Pancreas (tissue), 10 donors: ENCODE measurements at regions of chr3 and their contacts with region 1.

Region 1: DNA sequence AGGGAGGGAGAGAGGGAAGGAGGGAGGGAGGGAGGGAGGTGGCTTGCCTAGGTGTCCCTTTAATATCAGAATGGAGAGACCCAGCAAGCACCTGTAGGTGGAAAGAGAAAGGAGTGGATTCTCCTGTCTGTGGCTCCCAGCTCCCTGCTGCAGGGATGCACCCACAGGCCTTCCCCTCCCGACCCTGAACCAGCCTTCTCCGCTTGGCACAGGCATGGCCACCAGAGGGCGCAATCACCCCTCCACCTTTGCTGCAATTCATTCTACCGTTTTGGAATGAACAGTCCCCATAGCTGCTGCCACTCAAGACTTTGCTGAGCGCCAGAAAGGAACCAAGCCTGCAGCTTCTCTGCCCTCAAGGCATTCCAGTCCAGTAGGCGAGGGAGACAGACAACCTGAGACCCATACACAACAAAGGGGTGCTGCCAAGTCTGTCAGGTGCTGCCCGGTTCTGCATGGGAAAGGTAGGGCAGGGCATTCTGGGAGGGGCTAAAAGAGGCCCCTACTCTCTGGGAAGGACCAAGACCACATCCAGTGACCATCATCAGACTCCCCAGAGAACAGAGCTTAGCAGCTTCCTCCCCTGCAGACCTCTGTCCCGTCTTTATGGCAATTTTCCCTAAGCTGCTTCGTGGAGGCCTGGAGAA is 4.9 kb downstream of the TLR9 start:
- DNase-seq: peak; percentile 67 to 95 (median 85)
- ATAC-seq: peak; percentile 33 to 74 (median 72)
- H3K4me3 ChIP-seq: no peak overlapping the region
- H3K27ac ChIP-seq: no peak overlapping the region
- H3K4me1 ChIP-seq: peaks cover 13 to 16% (median 15%) of the 10 kb centered on the region in 3 donors
- H3K27me3 ChIP-seq: no peaks in the 10 kb centered on the region
- CTCF ChIP-seq: peak; percentile 80 to 95 (median 85)

Region 2: DNA sequence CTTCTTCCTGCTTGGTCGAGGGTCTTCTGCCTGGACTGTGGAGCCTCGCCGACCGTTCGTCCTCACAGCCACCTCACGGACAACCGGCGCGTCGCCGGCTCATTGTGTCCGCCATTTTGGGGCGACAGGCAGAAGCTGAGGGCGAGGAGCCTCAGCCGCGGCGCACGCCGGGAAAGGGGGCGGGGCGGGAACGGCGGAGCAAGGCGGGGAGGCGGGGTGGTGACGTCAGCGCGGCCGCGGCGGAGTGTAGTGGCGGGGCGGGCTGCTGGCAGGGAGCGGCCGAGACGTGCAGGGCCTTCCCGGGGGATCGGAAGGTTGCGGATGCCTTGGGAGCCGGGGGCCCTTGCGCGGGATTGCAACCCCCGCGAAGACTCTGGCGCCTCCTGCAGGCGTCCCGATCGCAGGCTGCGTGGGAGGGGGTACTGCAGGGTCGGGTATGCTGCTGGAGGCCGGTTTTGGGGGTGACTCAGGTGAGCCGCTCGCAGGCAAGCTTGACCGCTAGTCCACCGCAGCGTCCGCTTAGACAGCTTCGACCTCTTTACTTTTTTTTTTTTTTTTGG is 58.1 kb after region 1 on chr3 and contains the start of gene WDR82:
- intact Hi-C with region 1: loop called in 1 of 3 experiments (anchors 10 kb)
- DNase-seq: peak; percentile 96 to 100 (median 98)
- ATAC-seq: peak; percentile 93 to 96 (median 96)
- H3K4me3 ChIP-seq: peak within 1 kb of the TSS; percentile 84 to 90 (median 88)
- H3K27ac ChIP-seq: peak within 1 kb of the TSS; percentile 87 to 97 (median 92)
- H3K4me1 ChIP-seq: peaks cover 7 to 36% (median 8%) of the 10 kb centered on the region in 3 donors
- H3K27me3 ChIP-seq: no peaks in the 10 kb centered on the region
- CTCF ChIP-seq: peak in 3 of 4 donors; percentile 8 to 27 (median 21)
- total RNA-seq, gene WDR82: 15.1 to 32.1 (median 19.6) TPM